B cell (primary cell): ENCODE measurements at regions of chr3 and their contacts with region 1.

Region 1: DNA sequence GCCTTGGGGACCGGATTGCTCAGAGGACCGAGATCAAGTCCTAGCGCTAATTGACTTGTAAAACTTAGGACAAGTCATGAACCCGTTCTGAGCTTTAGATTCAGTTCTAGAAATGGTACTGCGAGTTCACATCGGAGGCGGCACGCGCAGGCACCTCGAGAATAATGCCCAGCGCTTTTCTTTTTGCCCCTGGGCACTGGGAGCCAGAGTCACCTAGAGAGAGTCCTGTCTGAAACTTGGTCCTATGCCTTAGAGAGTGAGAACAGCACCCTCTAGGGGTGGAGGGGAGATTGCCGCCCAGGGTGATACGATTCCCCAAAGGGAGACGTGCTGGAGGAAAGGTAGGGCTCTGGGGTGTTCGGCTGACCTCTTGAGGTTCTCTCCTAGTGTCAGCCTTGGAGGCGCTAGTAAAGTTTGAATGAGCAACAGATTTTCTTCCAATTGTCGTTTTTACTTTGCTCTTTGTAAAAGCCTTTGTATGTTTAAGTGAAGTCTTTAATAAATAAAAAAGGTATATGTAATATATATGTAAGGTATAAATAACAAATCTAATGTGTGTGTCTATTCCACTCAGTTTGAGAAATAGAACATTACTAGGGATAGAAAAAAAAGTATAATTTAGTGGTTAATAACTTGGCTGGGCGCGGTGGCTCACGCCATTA is 826 bp downstream of the EEF1AKMT4 start:
- DNase-seq: peak; percentile 92
- ATAC-seq: peak; percentile 65
- H3K4me3 ChIP-seq: peak overlapping the region; percentile 88 to 93 (median 91)
- H3K4me3 Mint-ChIP-seq: peak overlapping the region; percentile 87
- H3K27ac ChIP-seq: peak overlapping the region in 1 of 2 donors; percentile 58
- H3K27ac Mint-ChIP-seq: peak overlapping the region; percentile 78
- H3K4me1 ChIP-seq: peaks cover 5 to 17% of the 10 kb centered on the region in 2 donors
- H3K4me1 Mint-ChIP-seq: peaks cover 9% of the 10 kb centered on the region
- H3K27me3 ChIP-seq: no peaks in the 10 kb centered on the region
- H3K27me3 Mint-ChIP-seq: no peaks in the 10 kb centered on the region
- CTCF ChIP-seq: peak; percentile 94

Region 2: DNA sequence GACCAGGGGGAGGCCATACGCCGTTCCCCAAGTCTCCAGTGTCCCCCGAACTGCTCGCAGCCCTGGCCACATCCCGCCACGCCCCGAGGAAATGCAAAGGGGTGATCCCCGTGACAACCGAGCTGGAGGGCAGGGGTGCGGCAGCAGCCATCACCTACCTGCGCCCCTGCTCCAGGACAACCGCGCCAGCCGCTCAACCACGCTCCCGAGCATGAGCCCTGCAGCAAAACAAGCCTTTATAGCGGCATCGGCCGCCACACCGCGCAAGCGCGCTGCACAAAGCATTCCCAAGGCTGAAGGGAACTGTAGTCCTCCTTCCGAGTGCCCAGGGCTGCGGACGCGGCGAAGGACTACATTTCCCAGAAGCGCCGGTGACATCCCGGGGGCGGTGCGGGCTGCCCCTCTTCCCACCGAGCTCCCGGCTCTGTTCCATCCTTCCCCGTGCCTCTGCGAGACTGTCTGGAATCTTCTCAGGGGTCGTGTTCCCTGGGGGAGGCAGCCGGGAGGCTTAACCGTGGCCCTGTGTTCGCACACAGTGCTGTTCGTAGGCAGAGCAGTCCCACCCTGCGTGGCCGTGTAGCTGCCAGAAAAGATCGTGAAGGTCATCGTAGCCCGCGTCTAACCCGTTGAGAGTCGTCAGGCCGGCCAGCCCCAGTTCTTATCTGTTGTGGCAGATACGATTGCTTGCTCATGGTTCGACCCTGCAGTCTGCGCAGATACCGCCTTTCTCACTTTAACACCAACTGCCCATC is 232.4 kb before region 1 on chr3 and contains the start of gene ABCC5:
- CTCF ChIA-PET with region 1: no interaction called
- POLR2A ChIA-PET with region 1: interaction called, 3 read pairs
- intact Hi-C with region 1: loop called (anchors 1 kb)
- DNase-seq: peak; percentile 89
- ATAC-seq: peak; percentile 96
- H3K4me3 ChIP-seq: peak within 1 kb of the TSS; percentile 73 to 99 (median 93)
- H3K4me3 Mint-ChIP-seq: peak within 1 kb of the TSS; percentile 100
- H3K27ac ChIP-seq: peak within 1 kb of the TSS in 1 of 2 donors; percentile 10
- H3K27ac Mint-ChIP-seq: peak within 1 kb of the TSS; percentile 94
- H3K4me1 ChIP-seq: peaks cover 10 to 13% of the 10 kb centered on the region in 2 donors
- H3K4me1 Mint-ChIP-seq: peaks cover 20% of the 10 kb centered on the region
- H3K27me3 ChIP-seq: no peaks in the 10 kb centered on the region
- H3K27me3 Mint-ChIP-seq: peaks cover 15% of the 10 kb centered on the region
- CTCF ChIP-seq: peak; percentile 81
- total RNA-seq, gene ABCC5: 29.5 and 31.7 TPM in 2 replicates

Region 3: GRCh38 chr3:184174646-184175492 is 75.4 kb before region 1 on chr3 and contains the start of gene AP2M1:
- CTCF ChIA-PET with region 1: interaction called, 4 read pairs
- POLR2A ChIA-PET with region 1: no interaction called
- intact Hi-C with region 1: loop called (anchors 1 kb)
- DNase-seq: peak; percentile 98
- ATAC-seq: peak; percentile 98
- H3K4me3 ChIP-seq: peak within 1 kb of the TSS; percentile 57 to 100 (median 98)
- H3K4me3 Mint-ChIP-seq: peak within 1 kb of the TSS; percentile 93
- H3K27ac ChIP-seq: peak within 1 kb of the TSS; percentile 56 to 80
- H3K27ac Mint-ChIP-seq: peak within 1 kb of the TSS; percentile 96
- H3K4me1 ChIP-seq: peaks cover 23 to 34% of the 10 kb centered on the region in 2 donors
- H3K4me1 Mint-ChIP-seq: peaks cover 37% of the 10 kb centered on the region
- H3K27me3 ChIP-seq: no peaks in the 10 kb centered on the region
- H3K27me3 Mint-ChIP-seq: no peaks in the 10 kb centered on the region
- CTCF ChIP-seq: no peak
- total RNA-seq, gene AP2M1: 191 and 207 TPM in 2 replicates

Region 4: GRCh38 chr3:184229394-184230080 is 20.8 kb before region 1 on chr3 and contains the start of gene VWA5B2:
- CTCF ChIA-PET with region 1: interaction called, 23 read pairs
- POLR2A ChIA-PET with region 1: interaction called, 3 read pairs
- intact Hi-C with region 1: loop called (anchors 1 kb)
- DNase-seq: peak; percentile 88
- ATAC-seq: peak; percentile 98
- H3K4me3 ChIP-seq: peak within 1 kb of the TSS; percentile 9 to 74 (median 59)
- H3K4me3 Mint-ChIP-seq: peak within 1 kb of the TSS; percentile 85
- H3K27ac ChIP-seq: no peak within 1 kb of the TSS
- H3K27ac Mint-ChIP-seq: no peak within 1 kb of the TSS
- H3K4me1 ChIP-seq: peaks cover 15 to 25% of the 10 kb centered on the region in 2 donors
- H3K4me1 Mint-ChIP-seq: peaks cover 20% of the 10 kb centered on the region
- H3K27me3 ChIP-seq: peaks cover 0 to 73% (median 39%) of the 10 kb centered on the region in 4 experiments
- H3K27me3 Mint-ChIP-seq: peaks cover 44% of the 10 kb centered on the region
- CTCF ChIP-seq: peak; percentile 37
- total RNA-seq, gene VWA5B2: 0.37 TPM in 1 of 2 replicates, not detected in the other

Region 5: DNA sequence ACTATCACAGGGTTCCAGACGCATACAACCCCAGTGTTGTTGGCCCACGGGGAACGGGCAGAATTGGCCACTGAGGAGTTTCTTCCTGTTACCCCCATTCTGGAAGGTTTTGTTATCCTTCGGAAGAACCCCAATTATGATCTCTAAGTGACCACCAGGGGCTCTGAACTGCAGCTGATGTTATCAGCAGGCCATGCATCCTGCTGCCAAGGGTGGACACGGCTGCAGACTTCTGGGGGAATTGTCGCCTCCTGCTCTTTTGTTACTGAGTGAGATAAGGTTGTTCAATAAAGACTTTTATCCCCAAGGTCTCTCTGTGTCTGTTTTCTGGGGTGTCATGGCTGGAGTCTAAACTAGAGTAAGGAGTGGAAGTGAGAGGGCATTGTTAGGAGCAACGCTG is 58.4 kb after region 1 on chr3:
- CTCF ChIA-PET with region 1: no interaction called
- POLR2A ChIA-PET with region 1: no interaction called
- intact Hi-C with region 1: no loop called
- DNase-seq: no peak
- ATAC-seq: no peak
- H3K4me3 ChIP-seq: no peak overlapping the region
- H3K4me3 Mint-ChIP-seq: no peak overlapping the region
- H3K27ac ChIP-seq: no peak overlapping the region
- H3K27ac Mint-ChIP-seq: no peak overlapping the region
- H3K4me1 ChIP-seq: peaks cover 0 to under 1% of the 10 kb centered on the region in 2 donors
- H3K4me1 Mint-ChIP-seq: no peaks in the 10 kb centered on the region
- H3K27me3 ChIP-seq: no peaks in the 10 kb centered on the region
- H3K27me3 Mint-ChIP-seq: no peaks in the 10 kb centered on the region
- CTCF ChIP-seq: no peak

Region 6: DNA sequence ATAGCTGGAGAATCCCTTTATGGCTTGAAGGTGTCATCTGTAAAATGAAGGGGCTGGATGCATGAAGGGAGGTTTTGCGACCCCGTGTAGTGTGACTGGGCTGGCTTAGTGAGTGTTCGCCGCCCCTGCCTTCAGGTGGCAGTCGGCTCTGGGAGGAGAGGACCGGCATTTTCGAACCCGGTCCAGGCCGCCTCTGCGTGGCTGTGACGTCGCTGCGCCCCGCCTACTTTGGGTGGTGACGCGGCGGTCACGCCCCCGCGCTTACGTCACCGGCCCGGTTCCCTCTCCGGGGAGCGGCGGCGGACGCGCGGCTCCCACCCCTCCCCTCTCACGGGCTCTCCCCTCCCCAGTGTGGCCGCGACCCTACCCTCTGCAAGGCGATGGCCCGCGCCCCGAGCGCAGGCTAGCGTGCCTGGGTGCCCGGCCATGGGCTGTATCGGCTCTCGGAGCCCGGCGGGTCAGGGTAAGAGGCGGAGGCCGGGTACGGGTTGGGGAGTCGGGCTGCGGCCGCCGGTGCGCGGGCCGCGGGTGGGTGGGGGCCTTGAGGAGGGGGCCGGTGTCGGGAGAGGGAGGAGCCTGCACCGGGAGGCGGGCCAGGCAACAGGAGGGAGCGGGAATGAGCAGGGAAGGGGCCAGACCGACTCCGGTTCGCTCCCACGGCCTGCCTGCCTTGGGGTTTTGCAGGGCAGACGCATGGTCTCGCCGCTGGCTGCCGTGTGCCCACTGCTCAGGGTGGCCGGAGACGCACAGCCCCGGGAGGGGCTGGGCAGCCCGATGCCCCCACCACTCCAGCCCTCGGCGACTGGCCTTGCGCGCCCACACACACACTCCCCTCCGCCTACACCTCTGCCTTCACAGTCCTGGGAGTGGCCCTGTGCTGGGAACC is 85.6 kb after region 1 on chr3:
- CTCF ChIA-PET with region 1: no interaction called
- POLR2A ChIA-PET with region 1: no interaction called
- intact Hi-C with region 1: loop called (anchors 1 kb)
- DNase-seq: peak; percentile 92
- ATAC-seq: peak; percentile 80
- H3K4me3 ChIP-seq: peak overlapping the region; percentile 51 to 83 (median 73)
- H3K4me3 Mint-ChIP-seq: peak overlapping the region; percentile 94
- H3K27ac ChIP-seq: peak overlapping the region; percentile 93
- H3K27ac Mint-ChIP-seq: peak overlapping the region; percentile 90
- H3K4me1 ChIP-seq: peaks cover 14 to 25% of the 10 kb centered on the region in 2 donors
- H3K4me1 Mint-ChIP-seq: peaks cover 30% of the 10 kb centered on the region
- H3K27me3 ChIP-seq: peaks cover 0 to 3% (median 0%) of the 10 kb centered on the region in 4 experiments
- H3K27me3 Mint-ChIP-seq: no peaks in the 10 kb centered on the region
- CTCF ChIP-seq: no peak